ENCODE measurements at regions of chr7 and their contacts with region 1.

Region 1: GRCh38 chr7:23431702-23432199 is 38.5 kb downstream of the IGF2BP3 start:
- DNase-seq: no peak
- H3K4me3 ChIP-seq: no peak overlapping the region
- H3K27ac ChIP-seq: peak overlapping the region; percentile 49
- H3K4me1 ChIP-seq: peaks cover 22% of the 10 kb centered on the region
- H3K27me3 ChIP-seq: no peaks in the 10 kb centered on the region
- CTCF ChIP-seq: no peak
- POLR2A ChIP-seq: no peak

Region 2: GRCh38 chr7:22577396-22578001 is 854.3 kb before region 1 on chr7:
- CTCF ChIA-PET with region 1: no interaction called
- POLR2A ChIA-PET with region 1: no interaction called
- dilution Hi-C with region 1: no loop called
- intact Hi-C with region 1: no loop called
- DNase-seq: peak; percentile 94
- H3K4me3 ChIP-seq: peak overlapping the region in 1 of 3 experiments; percentile 34
- H3K27ac ChIP-seq: peak overlapping the region; percentile 99
- H3K4me1 ChIP-seq: peaks cover 47% of the 10 kb centered on the region
- H3K27me3 ChIP-seq: no peaks in the 10 kb centered on the region
- CTCF ChIP-seq: no peak
- POLR2A ChIP-seq: peak; percentile 20

Region 3: GRCh38 chr7:23418046-23418445 is 13.7 kb before region 1 on chr7:
- CTCF ChIA-PET with region 1: interaction called, 40 read pairs
- POLR2A ChIA-PET with region 1: no interaction called
- dilution Hi-C with region 1: no loop called
- intact Hi-C with region 1: no loop called
- DNase-seq: peak; percentile 84
- H3K4me3 ChIP-seq: no peak overlapping the region
- H3K27ac ChIP-seq: peak overlapping the region; percentile 32
- H3K4me1 ChIP-seq: peaks cover 26% of the 10 kb centered on the region
- H3K27me3 ChIP-seq: no peaks in the 10 kb centered on the region
- CTCF ChIP-seq: no peak
- POLR2A ChIP-seq: no peak

Region 4: DNA sequence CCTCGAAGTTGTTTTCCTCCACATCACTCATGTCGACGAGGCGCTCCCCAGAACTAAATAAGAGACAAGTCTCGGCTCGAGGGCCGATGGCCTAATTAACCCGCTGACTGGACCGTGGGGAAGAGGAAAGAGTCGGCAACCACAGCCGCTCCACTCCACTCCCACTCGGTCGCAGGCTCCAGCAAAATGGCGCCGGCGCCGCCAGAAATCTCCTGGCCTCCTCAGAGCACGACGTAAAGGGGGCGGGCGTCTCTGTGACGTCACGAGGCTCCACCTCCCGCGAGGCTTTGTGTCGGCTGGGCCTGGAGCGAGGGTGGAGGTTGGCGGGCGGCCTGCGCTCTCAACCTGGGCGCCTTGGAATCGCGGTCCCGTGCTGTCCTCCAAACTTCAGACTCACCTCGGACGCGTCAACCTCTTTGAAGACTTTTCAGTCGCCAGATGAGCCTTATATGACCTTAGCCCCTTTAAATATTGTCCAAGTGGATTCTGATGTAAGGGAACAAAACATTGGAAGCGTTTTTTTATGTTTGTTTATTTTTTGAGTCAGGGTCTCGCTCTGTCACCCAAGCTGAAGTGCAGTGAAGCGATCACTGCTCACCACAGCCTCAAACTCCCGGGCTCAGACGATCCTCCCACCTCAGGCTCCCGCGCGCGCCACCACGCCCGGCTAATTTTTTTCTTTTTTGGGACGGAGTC is 100.2 kb after region 1 on chr7 and contains the start of gene TRA2A:
- CTCF ChIA-PET with region 1: no interaction called
- POLR2A ChIA-PET with region 1: no interaction called
- dilution Hi-C with region 1: no loop called
- intact Hi-C with region 1: loop called (anchors 5 kb)
- DNase-seq: peak; percentile 94
- H3K4me3 ChIP-seq: peak within 1 kb of the TSS; percentile 83 to 99 (median 88)
- H3K27ac ChIP-seq: peak within 1 kb of the TSS; percentile 100
- H3K4me1 ChIP-seq: peaks cover 30% of the 10 kb centered on the region
- H3K27me3 ChIP-seq: no peaks in the 10 kb centered on the region
- CTCF ChIP-seq: no peak
- POLR2A ChIP-seq: peak; percentile 99
- total RNA-seq, gene TRA2A: 105 and 112 TPM in 2 replicates

Region 5: DNA sequence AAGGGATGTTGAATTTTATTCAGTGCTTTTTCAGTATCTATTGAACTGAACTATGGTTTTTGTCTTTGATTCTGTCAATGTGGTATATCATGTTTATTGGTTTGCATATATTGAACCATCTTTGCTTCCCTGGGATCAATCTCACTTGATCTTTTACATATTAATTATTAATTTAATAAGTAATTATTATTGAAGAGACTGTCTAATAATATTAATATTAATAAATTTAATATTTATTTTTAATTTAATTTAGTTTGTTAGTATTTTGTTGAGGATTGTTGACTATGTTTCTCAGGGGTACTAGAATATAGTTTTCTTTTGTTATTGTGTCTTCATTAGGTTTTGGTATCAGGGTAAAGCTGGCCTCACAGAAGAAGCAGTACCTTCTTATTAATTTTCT is 126.6 kb after region 1 on chr7:
- CTCF ChIA-PET with region 1: no interaction called
- POLR2A ChIA-PET with region 1: no interaction called
- dilution Hi-C with region 1: no loop called
- intact Hi-C with region 1: no loop called
- DNase-seq: no peak
- H3K4me3 ChIP-seq: no peak overlapping the region
- H3K27ac ChIP-seq: no peak overlapping the region
- H3K4me1 ChIP-seq: no peaks in the 10 kb centered on the region
- H3K27me3 ChIP-seq: peaks cover 8 to 31% of the 10 kb centered on the region in 2 experiments
- CTCF ChIP-seq: no peak
- POLR2A ChIP-seq: no peak

Region 6: GRCh38 chr7:24152356-24152755 is 720.6 kb after region 1 on chr7:
- CTCF ChIA-PET with region 1: no interaction called
- POLR2A ChIA-PET with region 1: no interaction called
- dilution Hi-C with region 1: no loop called
- intact Hi-C with region 1: no loop called
- DNase-seq: no peak
- H3K4me3 ChIP-seq: no peak overlapping the region
- H3K27ac ChIP-seq: no peak overlapping the region
- H3K4me1 ChIP-seq: no peaks in the 10 kb centered on the region
- H3K27me3 ChIP-seq: no peaks in the 10 kb centered on the region
- CTCF ChIP-seq: no peak
- POLR2A ChIP-seq: no peak